ENCODE measurements at regions of chr19 and their contacts with region 1.

Region 1: GRCh38 chr19:18514800-18515651 is 6.8 kb downstream of the ELL start:
- DNase-seq: peak; percentile 91 to 92
- H3K4me3 ChIP-seq: no peak overlapping the region
- H3K4me3 Mint-ChIP-seq: no peak overlapping the region
- H3K27ac Mint-ChIP-seq: peak overlapping the region; percentile 76
- H3K4me1 ChIP-seq: peaks cover 19% of the 10 kb centered on the region
- H3K4me1 Mint-ChIP-seq: peaks cover 30% of the 10 kb centered on the region
- H3K27me3 ChIP-seq: no peaks in the 10 kb centered on the region
- H3K27me3 Mint-ChIP-seq: no peaks in the 10 kb centered on the region
- CTCF ChIP-seq: no peak

Region 2: DNA sequence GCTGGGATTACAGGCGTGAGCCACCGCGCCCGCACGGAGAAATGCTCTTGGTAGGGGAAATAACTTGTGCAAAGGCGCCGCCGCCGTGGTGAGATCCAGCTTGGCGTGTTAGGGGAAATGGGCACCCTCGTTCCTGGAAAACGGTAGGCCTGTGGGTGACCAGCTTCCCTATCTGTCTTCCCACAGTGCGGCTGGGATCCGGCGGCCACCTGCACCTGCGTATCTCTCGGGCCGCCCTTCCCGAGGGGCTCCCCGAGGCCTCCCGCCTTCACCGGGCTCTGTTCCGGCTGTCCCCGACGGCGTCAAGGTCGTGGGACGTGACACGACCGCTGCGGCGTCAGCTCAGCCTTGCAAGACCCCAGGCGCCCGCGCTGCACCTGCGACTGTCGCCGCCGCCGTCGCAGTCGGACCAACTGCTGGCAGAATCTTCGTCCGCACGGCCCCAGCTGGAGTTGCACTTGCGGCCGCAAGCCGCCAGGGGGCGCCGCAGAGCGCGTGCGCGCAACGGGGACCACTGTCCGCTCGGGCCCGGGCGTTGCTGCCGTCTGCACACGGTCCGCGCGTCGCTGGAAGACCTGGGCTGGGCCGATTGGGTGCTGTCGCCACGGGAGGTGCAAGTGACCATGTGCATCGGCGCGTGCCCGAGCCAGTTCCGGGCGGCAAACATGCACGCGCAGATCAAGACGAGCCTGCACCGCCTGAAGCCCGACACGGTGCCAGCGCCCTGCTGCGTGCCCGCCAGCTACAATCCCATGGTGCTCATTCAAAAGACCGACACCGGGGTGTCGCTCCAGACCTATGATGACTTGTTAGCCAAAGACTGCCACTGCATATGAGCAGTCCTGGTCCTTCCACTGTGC is 126.7 kb before region 1 on chr19:
- CTCF ChIA-PET with region 1: no interaction called
- POLR2A ChIA-PET with region 1: no interaction called
- intact Hi-C with region 1: no loop called
- DNase-seq: no peak
- H3K4me3 ChIP-seq: peak overlapping the region; percentile 76
- H3K4me3 Mint-ChIP-seq: peak overlapping the region; percentile 85
- H3K27ac Mint-ChIP-seq: no peak overlapping the region
- H3K4me1 ChIP-seq: peaks cover 24% of the 10 kb centered on the region
- H3K4me1 Mint-ChIP-seq: peaks cover 6% of the 10 kb centered on the region
- H3K27me3 ChIP-seq: no peaks in the 10 kb centered on the region
- H3K27me3 Mint-ChIP-seq: no peaks in the 10 kb centered on the region
- CTCF ChIP-seq: peak; percentile 36 to 73

Region 3: GRCh38 chr19:18488838-18489626 is 26.0 kb before region 1 on chr19:
- CTCF ChIA-PET with region 1: interaction called, 28 read pairs
- POLR2A ChIA-PET with region 1: interaction called, 3 read pairs
- intact Hi-C with region 1: loop called (anchors 5 kb)
- DNase-seq: peak; percentile 68 to 80
- H3K4me3 ChIP-seq: no peak overlapping the region
- H3K4me3 Mint-ChIP-seq: no peak overlapping the region
- H3K27ac Mint-ChIP-seq: no peak overlapping the region
- H3K4me1 ChIP-seq: no peaks in the 10 kb centered on the region
- H3K4me1 Mint-ChIP-seq: no peaks in the 10 kb centered on the region
- H3K27me3 ChIP-seq: no peaks in the 10 kb centered on the region
- H3K27me3 Mint-ChIP-seq: no peaks in the 10 kb centered on the region
- CTCF ChIP-seq: peak; percentile 36 to 79

Measured in Caco-2 (cell line).